ENCODE measurements at regions of chr1 and their contacts with region 1.

Region 1: GRCh38 chr1:224113918-224114786 is at the start of gene FBXO28:
- DNase-seq: peak; percentile 94
- ATAC-seq: peak; percentile 100
- total RNA-seq, gene FBXO28: 18.1 TPM

Region 2: GRCh38 chr1:224329842-224330753 is 215.9 kb after region 1 on chr1 and contains the start of gene NVL:
- intact Hi-C with region 1: loop called (anchors 5 kb)
- DNase-seq: peak; percentile 88
- ATAC-seq: peak; percentile 99
- total RNA-seq, gene NVL: 9.5 TPM

Region 3: GRCh38 chr1:224454397-224455066 is 340.4 kb after region 1 on chr1:
- intact Hi-C with region 1: loop called (anchors 5 kb)
- DNase-seq: no peak
- ATAC-seq: no peak